ENCODE measurements at regions of chrX and their contacts with region 1.

Region 1: DNA sequence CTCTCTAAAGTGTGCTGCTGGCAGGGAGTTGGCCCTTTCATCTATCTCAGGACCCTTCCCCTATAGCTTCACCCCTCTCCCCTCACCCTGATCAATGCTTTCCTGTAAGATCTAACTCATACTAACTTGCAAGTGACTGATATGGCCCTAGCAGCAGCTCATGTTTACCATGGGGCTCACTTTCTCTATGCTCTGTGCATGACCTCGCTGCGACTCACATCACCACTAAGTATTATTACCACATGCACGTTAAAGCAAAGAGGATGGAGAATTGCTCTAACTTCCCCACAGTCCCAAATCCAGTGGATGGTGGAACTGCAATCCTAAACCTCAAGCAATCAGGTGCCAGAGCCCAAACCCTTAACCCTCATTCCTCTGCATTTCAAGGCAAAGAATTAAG is 626.6 kb downstream of the MID1IP1 start:
- DNase-seq: peak; percentile 58
- H3K4me3 Mint-ChIP-seq: peak overlapping the region; percentile 12
- H3K27ac Mint-ChIP-seq: peak overlapping the region; percentile 95
- H3K4me1 Mint-ChIP-seq: peaks cover 58% of the 10 kb centered on the region
- H3K27me3 Mint-ChIP-seq: no peaks in the 10 kb centered on the region

Region 2: GRCh38 chrX:39204945-39205344 is 223.0 kb before region 1 on chrX:
- intact Hi-C with region 1: loop called (anchors 2 kb)
- DNase-seq: no peak
- H3K4me3 Mint-ChIP-seq: peak overlapping the region; percentile 47
- H3K27ac Mint-ChIP-seq: peak overlapping the region; percentile 86
- H3K4me1 Mint-ChIP-seq: peaks cover 55% of the 10 kb centered on the region
- H3K27me3 Mint-ChIP-seq: no peaks in the 10 kb centered on the region

Region 3: GRCh38 chrX:39309018-39309635 is 118.8 kb before region 1 on chrX:
- intact Hi-C with region 1: loop called (anchors 1 kb)
- DNase-seq: peak; percentile 74
- H3K4me3 Mint-ChIP-seq: peak overlapping the region; percentile 54
- H3K27ac Mint-ChIP-seq: peak overlapping the region; percentile 100
- H3K4me1 Mint-ChIP-seq: peaks cover 50% of the 10 kb centered on the region
- H3K27me3 Mint-ChIP-seq: no peaks in the 10 kb centered on the region

Region 4: DNA sequence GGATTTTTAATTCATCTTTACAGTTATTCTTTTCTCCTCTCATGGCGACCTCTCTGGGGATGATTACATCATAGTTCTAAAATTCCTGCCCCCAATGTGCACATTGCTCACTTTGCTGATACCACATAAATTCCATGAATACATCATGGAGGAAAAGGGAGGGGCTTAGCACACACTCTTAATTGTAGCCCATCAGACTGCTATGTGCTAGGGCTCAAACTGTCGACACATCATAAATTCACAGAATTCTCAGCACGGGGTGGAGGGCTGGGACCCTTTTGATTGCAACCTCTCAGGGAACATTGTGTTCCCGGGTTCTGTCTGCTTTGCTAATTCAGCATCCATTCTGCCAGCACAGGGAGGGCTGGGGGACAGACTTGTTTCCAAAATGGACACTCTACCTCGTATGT is 76.9 kb after region 1 on chrX:
- intact Hi-C with region 1: loop called (anchors 5 kb)
- DNase-seq: no peak
- H3K4me3 Mint-ChIP-seq: no peak overlapping the region
- H3K27ac Mint-ChIP-seq: no peak overlapping the region
- H3K4me1 Mint-ChIP-seq: peaks cover 15% of the 10 kb centered on the region
- H3K27me3 Mint-ChIP-seq: no peaks in the 10 kb centered on the region

Region 5: DNA sequence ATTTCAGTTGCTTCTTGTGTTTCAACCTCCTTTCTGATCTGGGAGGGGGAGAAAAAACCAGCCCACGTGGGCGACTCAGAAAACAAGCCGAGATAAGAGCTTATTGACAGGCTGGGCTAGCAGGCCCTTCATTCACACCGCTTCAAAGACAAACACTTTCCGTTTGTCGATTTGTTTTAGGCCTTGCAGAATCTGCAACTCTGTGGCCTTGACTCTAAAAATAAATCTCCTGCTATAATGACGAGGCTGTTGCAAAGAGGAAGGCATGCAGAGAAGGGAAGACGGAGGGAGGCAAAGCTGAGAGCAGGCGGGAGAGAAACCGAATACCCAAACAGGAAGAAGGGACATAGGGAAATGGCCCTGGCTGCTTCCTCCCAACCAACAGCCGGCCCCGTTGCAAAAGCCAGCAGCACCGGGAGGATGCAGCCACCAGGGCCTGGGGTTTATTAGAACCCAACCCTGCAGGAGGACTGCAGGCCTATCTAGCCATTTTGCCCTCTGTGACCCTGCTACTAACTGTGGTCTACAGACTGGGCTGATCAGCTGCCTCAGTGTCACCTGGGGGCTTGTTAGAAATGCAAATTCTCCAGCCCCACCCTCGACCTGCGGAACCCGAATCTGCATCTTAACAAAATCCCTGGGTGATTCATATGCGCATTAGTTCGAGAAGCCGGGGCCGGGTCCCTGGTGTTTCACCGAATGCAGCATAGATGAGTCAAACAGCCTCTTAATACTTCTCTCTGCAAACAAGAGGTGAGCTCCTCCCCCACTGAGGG is 344.3 kb after region 1 on chrX:
- intact Hi-C with region 1: loop called (anchors 5 kb)
- DNase-seq: peak; percentile 81
- H3K4me3 Mint-ChIP-seq: peak overlapping the region; percentile 82
- H3K27ac Mint-ChIP-seq: peak overlapping the region; percentile 99
- H3K4me1 Mint-ChIP-seq: peaks cover 37% of the 10 kb centered on the region
- H3K27me3 Mint-ChIP-seq: no peaks in the 10 kb centered on the region